ENCODE measurements at regions of chr12 and their contacts with region 1.

Region 1: GRCh38 chr12:46071769-46072624 is 81.6 kb upstream of the SCAF11 start:
- DNase-seq: peak; percentile 40
- H3K4me3 Mint-ChIP-seq: no peak overlapping the region
- H3K27ac Mint-ChIP-seq: peak overlapping the region; percentile 28
- H3K4me1 Mint-ChIP-seq: peaks cover 5% of the 10 kb centered on the region
- H3K27me3 Mint-ChIP-seq: peaks cover 4% of the 10 kb centered on the region

Region 2: DNA sequence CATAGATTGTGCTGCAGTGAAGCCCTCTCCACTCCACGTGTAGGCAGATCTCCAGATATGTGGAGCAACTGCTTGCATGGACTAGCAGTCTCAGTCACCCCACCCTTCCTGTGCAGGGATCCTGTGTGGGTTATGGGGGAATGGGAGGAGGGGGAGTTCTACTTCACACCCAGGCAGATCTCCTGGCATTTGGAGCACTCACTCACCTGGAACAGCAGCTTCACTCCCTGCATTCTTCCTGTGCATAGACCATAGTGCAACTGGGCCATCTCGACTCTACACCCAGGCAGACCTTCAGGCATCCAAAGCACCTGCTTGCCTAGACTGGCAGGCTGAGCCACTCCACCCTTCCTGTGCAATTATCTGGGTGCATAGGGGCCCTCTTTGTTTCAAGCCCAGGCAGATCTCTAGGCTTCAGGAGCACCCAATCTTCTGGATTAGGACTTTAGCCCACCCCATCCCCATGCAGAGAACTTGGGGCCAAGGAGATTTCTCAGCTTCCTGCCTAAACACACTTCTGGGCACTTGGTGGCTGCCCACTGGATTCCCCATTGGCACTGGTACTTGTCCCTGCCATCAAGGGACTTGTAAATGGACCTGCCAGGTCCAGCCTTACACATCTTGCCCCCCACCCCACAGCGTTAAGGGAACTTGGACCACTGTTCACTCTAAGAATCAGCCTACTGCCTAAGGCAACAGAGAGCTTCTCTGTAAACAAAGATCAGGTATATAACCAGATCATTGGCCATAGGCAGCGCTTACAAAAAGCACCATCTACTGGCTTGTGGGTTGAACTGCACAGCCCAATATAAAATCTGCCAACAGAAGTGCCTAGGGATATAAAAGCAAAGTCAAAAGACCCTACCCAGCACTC is 911.6 kb after region 1 on chr12:
- intact Hi-C with region 1: loop called (anchors 5 kb)
- DNase-seq: peak; percentile 21
- H3K4me3 Mint-ChIP-seq: no peak overlapping the region
- H3K27ac Mint-ChIP-seq: no peak overlapping the region
- H3K4me1 Mint-ChIP-seq: no peaks in the 10 kb centered on the region
- H3K27me3 Mint-ChIP-seq: peaks cover 18% of the 10 kb centered on the region

Measured in activated T-helper 2 cell treated with anti-CD3 and anti-CD28 coated beads, Interferon-gamma antibody, Interleukin-2, Interleukin-4, amounts not matched to agents 10 μg/mL and 5 μg/mL and 100 μg/mL, durations not matched to agents 14 hours and 24 hours and 36 hours (primary cell).